ENCODE measurements at regions of chr2 and their contacts with region 1.

Region 1: DNA sequence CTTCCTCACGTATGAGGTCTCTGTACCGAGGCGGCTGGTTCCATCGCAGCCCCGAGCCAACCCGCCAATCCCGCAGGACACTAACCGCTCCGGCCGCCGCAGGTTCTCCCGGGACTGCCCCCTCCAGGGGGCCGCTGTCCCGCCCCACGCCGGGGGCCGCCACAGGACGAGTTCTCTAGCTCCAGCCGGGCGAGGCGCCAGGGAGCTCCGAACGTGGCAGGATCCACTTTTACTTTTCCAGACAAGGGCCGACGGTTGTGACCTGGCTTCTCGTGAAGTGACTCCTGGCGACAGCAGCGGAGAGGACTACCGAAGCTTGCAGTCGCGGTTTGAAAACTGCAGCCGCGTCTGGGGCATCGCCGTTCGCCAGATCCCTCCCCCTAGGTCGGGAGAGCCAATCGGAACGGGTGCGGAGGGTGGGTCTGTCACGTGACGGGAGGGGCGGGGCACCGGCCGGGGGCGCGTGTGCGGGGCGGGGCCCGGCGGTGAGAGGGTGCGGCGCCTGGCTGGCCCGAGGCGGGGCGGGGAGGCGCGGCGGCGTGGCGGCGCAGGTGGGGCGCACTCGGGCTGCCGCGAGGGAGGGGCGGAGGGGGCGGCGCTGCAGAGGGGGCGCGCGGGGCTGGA is at the start of gene STK17B:
- DNase-seq: peak; percentile 97
- ATAC-seq: peak; percentile 62
- H3K4me3 Mint-ChIP-seq: peak within 1 kb of the TSS; percentile 98
- H3K27ac Mint-ChIP-seq: peak within 1 kb of the TSS; percentile 99
- H3K4me1 Mint-ChIP-seq: peaks cover 32% of the 10 kb centered on the region
- H3K27me3 Mint-ChIP-seq: no peaks in the 10 kb centered on the region
- total RNA-seq, gene STK17B: 476 to 483 TPM

Region 2: DNA sequence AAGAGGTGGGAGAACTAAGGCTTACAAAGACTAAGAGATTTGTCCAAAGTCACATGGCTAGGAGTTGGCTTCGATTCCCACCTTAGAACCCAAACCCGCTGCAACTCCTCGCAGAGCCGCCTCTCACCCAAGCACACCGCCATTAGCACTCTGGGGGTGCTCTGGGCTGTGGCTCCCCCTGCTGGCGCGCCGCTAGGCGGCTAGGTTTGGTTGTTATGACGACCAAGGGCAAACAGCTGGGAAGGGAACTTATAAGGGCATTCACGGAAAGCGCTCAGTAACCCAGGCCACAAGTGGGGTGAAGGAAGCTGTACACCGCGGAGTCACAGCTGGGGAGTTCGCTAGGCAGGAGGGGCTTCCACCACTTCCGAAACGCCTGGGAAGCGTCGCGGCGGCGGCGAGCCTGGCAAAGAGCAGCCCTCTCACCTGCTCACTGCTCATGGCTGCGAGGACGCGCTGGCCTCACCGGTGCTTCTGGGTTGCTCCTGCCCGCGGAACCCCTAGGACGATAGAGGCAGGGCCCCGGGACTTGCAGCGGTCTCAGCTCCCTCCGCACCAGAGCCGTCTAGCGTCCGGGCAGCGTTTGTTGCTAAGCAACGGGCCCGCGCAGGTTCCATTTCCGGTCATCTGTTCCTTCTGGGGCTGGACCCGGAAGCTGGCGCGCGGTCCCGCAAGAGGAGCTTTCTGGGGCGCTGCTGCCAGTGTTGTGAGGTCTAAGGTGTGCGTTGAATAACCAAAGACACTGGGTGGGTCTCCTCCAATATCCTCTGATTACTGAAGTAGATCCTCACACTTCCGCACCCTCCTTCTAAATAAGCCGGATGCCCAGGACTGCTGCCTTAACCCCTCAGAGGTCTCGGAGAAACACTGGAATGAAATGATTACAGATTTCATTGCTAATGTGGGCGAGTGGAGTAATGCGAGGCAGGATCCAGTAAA is 102.8 kb before region 1 on chr2 and contains the start of gene DNAH7:
- POLR2A ChIA-PET with region 1: no interaction called
- DNase-seq: peak; percentile 96
- ATAC-seq: peak; percentile 97
- H3K4me3 Mint-ChIP-seq: peak within 1 kb of the TSS; percentile 80
- H3K27ac Mint-ChIP-seq: peak within 1 kb of the TSS; percentile 79
- H3K4me1 Mint-ChIP-seq: peaks cover 7% of the 10 kb centered on the region
- H3K27me3 Mint-ChIP-seq: peaks cover 15% of the 10 kb centered on the region
- total RNA-seq, gene DNAH7: not detected

Region 3: GRCh38 chr2:196149948-196150347 is 21.4 kb before region 1 on chr2:
- POLR2A ChIA-PET with region 1: interaction called, 154 read pairs
- DNase-seq: no peak
- ATAC-seq: peak; percentile 2
- H3K4me3 Mint-ChIP-seq: peak overlapping the region; percentile 69
- H3K27ac Mint-ChIP-seq: peak overlapping the region; percentile 74
- H3K4me1 Mint-ChIP-seq: peaks cover 77% of the 10 kb centered on the region
- H3K27me3 Mint-ChIP-seq: no peaks in the 10 kb centered on the region

Region 4: GRCh38 chr2:196182439-196183171 is 11.2 kb after region 1 on chr2:
- POLR2A ChIA-PET with region 1: interaction called, 39 read pairs
- DNase-seq: no peak
- ATAC-seq: peak; percentile 10
- H3K4me3 Mint-ChIP-seq: peak overlapping the region; percentile 84
- H3K27ac Mint-ChIP-seq: peak overlapping the region; percentile 96
- H3K4me1 Mint-ChIP-seq: peaks cover 62% of the 10 kb centered on the region
- H3K27me3 Mint-ChIP-seq: no peaks in the 10 kb centered on the region

Region 5: GRCh38 chr2:196220671-196221070 is 49.3 kb after region 1 on chr2:
- POLR2A ChIA-PET with region 1: interaction called, 169 read pairs
- DNase-seq: no peak
- ATAC-seq: peak; percentile 88
- H3K4me3 Mint-ChIP-seq: peak overlapping the region; percentile 6
- H3K27ac Mint-ChIP-seq: peak overlapping the region; percentile 1
- H3K4me1 Mint-ChIP-seq: peaks cover 51% of the 10 kb centered on the region
- H3K27me3 Mint-ChIP-seq: no peaks in the 10 kb centered on the region

Region 6: DNA sequence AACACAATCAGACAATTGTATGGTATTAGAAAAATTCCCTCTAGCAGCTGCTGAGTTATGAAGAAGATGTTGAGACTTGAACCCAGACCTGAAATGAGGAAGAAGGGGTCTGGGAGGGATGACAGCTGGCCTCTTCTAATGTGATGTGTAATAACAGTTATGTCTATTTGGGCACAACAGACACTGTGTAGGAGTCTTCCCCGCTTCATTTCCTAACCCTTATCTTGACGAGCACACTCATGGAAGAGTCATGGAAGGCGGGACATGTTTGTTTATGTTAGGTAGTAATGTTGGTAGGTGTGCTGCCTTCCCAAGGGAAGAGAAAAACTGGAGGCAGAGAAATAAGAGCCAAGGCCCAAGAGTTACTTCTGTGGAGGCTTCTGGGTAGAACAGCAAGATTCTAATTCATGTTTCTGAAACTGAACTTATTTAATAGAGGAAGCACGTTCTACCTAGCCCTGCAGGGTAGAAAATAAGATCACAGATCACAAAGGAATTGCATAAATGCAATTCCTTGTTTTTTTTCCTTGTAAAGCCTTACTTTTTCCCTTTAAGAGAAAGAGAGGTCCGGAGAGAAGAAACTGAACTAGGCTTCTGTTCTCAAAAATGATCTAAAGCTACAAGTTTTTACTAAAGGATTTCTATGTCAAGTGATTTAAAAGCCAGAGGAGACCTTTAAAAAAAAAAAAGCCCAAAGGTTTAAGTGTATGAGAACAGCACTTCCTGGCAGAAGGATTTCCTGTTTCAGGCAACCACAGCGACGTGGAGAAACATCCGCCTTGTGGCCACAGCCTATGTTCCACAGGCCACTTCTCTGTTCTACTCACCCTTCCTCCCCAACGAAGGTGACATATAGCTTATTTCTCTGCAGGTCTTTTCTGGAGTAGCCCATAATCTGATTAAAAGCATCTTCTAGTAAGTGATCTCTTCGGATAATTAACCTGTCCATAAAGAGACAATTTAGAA is 68.5 kb after region 1 on chr2:
- POLR2A ChIA-PET with region 1: interaction called, 169 read pairs
- DNase-seq: peak; percentile 80
- ATAC-seq: peak; percentile 62
- H3K4me3 Mint-ChIP-seq: peak overlapping the region; percentile 78
- H3K27ac Mint-ChIP-seq: peak overlapping the region; percentile 93
- H3K4me1 Mint-ChIP-seq: peaks cover 70% of the 10 kb centered on the region
- H3K27me3 Mint-ChIP-seq: no peaks in the 10 kb centered on the region

Region 7: DNA sequence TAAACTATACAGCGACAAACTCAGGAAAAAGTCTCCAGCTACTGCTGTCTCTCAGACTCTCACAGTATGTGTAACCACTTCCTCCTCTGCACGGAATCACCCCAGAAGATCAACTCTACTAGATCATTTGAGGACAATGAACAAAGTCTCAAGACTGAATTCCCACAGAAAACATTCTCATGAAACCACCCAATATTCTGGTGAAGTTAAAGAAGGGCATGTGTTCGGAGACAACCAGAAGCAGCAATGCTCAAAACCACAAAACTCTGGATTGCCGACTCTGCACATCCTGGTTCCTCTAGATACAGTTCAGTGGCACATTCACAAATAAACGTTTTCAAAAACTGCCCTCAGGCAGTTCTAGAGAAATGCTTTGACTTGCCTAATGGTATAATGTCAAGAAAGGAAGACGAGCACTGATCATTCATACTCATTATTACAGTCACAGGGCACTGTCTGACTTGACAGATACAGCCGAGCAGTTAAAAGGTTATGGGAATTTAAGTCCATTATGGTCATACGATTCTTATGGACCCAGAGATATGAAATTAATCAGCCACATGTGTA is 91.9 kb after region 1 on chr2:
- POLR2A ChIA-PET with region 1: interaction called, 145 read pairs
- DNase-seq: no peak
- ATAC-seq: peak; percentile 76
- H3K4me3 Mint-ChIP-seq: peak overlapping the region; percentile 79
- H3K27ac Mint-ChIP-seq: peak overlapping the region; percentile 92
- H3K4me1 Mint-ChIP-seq: peaks cover 65% of the 10 kb centered on the region
- H3K27me3 Mint-ChIP-seq: no peaks in the 10 kb centered on the region

Region 8: GRCh38 chr2:196696423-196697079 is 525.2 kb after region 1 on chr2:
- POLR2A ChIA-PET with region 1: no interaction called
- DNase-seq: no peak
- ATAC-seq: no peak
- H3K4me3 Mint-ChIP-seq: no peak overlapping the region
- H3K27ac Mint-ChIP-seq: no peak overlapping the region
- H3K4me1 Mint-ChIP-seq: no peaks in the 10 kb centered on the region
- H3K27me3 Mint-ChIP-seq: no peaks in the 10 kb centered on the region

Measured in activated naive CD8-positive, alpha-beta T cell treated with anti-CD3 and anti-CD28 coated beads, Interleukin-2, amount 10 ng/mL, durations not matched to agents 7 days and 5 days (primary cell).